Stomach (tissue), 19 donors: ENCODE measurements at regions of chr9 and their contacts with region 1.

Region 1: GRCh38 chr9:34591248-34591916 is 1.9 kb upstream of the CNTFR start:
- DNase-seq: peak; percentile 89 to 94
- H3K4me3 ChIP-seq: peak overlapping the region; percentile 24 to 66 (median 48)
- H3K27ac ChIP-seq: peak overlapping the region in 2 of 5 donors; percentile 41 to 50
- H3K4me1 ChIP-seq: peaks cover 38 to 54% (median 47%) of the 10 kb centered on the region in 4 donors
- H3K27me3 ChIP-seq: peaks cover 3 to 90% (median 74%) of the 10 kb centered on the region in 3 donors
- CTCF ChIP-seq: peak in 5 of 7 experiments; percentile 82 to 93 (median 92)
- EP300 ChIP-seq: no peak
- POLR2A ChIP-seq: no peak

Region 2: DNA sequence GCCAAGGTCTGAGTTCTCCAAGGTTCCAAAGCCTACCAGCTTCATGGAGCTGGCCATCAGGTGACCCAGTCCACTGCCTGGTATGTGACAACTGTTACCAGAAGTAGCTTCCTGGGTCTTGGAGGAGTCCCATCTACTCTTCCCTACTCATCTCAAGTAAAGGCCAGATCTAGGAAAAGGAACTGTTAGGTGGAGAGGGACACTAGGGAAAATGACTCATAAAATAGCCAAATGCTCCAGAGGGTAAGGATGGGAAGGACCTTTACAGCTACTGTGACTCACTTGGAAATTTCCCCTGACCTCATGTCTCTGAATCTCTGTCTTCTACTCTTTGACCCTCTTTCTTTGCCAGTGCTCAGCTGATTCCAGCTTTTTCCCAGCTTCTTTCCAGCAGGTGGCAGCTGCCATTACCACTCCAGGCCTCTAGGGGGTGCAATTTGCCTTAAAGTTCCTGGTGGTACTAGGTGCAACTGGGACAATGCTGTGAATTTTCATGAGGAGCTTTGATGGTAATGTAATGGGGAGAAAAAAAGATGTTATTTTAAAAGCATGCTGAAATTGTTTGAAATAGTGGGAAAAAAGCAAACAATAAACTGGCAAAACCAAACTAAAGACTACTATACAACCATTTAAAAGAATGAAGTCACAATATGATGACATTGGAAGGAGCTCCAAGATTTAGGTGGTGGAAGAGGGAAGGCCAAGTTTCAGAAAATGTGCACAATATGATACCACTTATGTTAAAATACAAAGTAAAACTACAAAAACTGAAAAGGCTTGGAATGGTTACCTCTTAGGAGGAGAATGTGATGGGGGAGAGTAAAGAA is 187.6 kb before region 1 on chr9:
- intact Hi-C with region 1: loop called (anchors 10 kb)
- DNase-seq: peak; percentile 77 to 81
- H3K4me3 ChIP-seq: no peak overlapping the region
- H3K27ac ChIP-seq: no peak overlapping the region
- H3K4me1 ChIP-seq: no peaks in the 10 kb centered on the region
- H3K27me3 ChIP-seq: no peaks in the 10 kb centered on the region
- CTCF ChIP-seq: peak in 6 of 7 experiments; percentile 25 to 99 (median 96)
- EP300 ChIP-seq: no peak
- POLR2A ChIP-seq: no peak

Region 3: DNA sequence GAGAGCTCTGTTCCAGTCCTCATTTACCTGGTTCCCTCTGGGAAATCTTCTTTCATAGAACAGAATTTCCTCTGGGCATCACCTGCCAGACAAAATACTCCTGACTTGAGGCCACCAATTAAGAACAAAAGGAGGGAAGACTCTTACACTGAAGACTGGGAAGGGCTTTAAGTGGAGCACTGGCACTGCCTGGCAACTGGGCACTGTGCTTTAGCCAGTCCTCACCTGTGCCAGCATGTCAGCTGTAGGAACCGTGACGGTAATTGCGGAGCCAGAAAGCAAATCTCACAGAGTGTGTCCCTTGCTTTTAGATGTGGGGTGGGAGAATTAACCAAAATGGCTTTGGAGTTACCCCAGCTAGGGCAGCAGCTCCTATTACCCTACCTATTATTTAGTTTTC is 173.6 kb before region 1 on chr9:
- intact Hi-C with region 1: no loop called
- DNase-seq: no peak
- H3K4me3 ChIP-seq: no peak overlapping the region
- H3K27ac ChIP-seq: no peak overlapping the region
- H3K4me1 ChIP-seq: no peaks in the 10 kb centered on the region
- H3K27me3 ChIP-seq: no peaks in the 10 kb centered on the region
- CTCF ChIP-seq: no peak
- EP300 ChIP-seq: no peak
- POLR2A ChIP-seq: no peak

Region 4: GRCh38 chr9:34554211-34555001 is 37.0 kb before region 1 on chr9:
- intact Hi-C with region 1: loop called (anchors 5 kb)
- DNase-seq: no peak
- H3K4me3 ChIP-seq: no peak overlapping the region
- H3K27ac ChIP-seq: no peak overlapping the region
- H3K4me1 ChIP-seq: peaks cover 3 to 6% (median 4%) of the 10 kb centered on the region in 4 donors
- H3K27me3 ChIP-seq: peaks cover 0 to 51% (median 9%) of the 10 kb centered on the region in 3 donors
- CTCF ChIP-seq: no peak
- EP300 ChIP-seq: no peak
- POLR2A ChIP-seq: no peak